T-cell (primary cell): ENCODE measurements at regions of chr1 and their contacts with region 1.

Region 1: GRCh38 chr1:114346480-114347029 is 164.4 kb downstream of the TRIM33 start:
- DNase-seq: peak; percentile 91 to 99 (median 97)
- ATAC-seq: peak; percentile 97 to 100 (median 98)
- H3K4me3 ChIP-seq: peak overlapping the region; percentile 39 to 56
- H3K4me3 Mint-ChIP-seq: peak overlapping the region; percentile 83 to 88 (median 85)
- H3K27ac ChIP-seq: peak overlapping the region; percentile 52
- H3K27ac Mint-ChIP-seq: peak overlapping the region; percentile 90 to 92
- H3K4me1 ChIP-seq: peaks cover 17 to 44% of the 10 kb centered on the region in 2 experiments
- H3K4me1 Mint-ChIP-seq: peaks cover 29 to 41% (median 36%) of the 10 kb centered on the region in 3 donors
- H3K27me3 ChIP-seq: no peaks in the 10 kb centered on the region
- H3K27me3 Mint-ChIP-seq: peaks cover 0 to 2% of the 10 kb centered on the region in 2 donors

Region 2: GRCh38 chr1:114053604-114054003 is 293.0 kb before region 1 on chr1:
- CTCF ChIA-PET with region 1: no interaction called
- POLR2A ChIA-PET with region 1: no interaction called
- DNase-seq: no peak
- ATAC-seq: no peak
- H3K4me3 ChIP-seq: no peak overlapping the region
- H3K4me3 Mint-ChIP-seq: no peak overlapping the region
- H3K27ac ChIP-seq: no peak overlapping the region
- H3K27ac Mint-ChIP-seq: no peak overlapping the region
- H3K4me1 ChIP-seq: no peaks in the 10 kb centered on the region
- H3K4me1 Mint-ChIP-seq: no peaks in the 10 kb centered on the region
- H3K27me3 ChIP-seq: peaks cover 0 to 10% of the 10 kb centered on the region in 2 experiments
- H3K27me3 Mint-ChIP-seq: peaks cover 8 to 10% of the 10 kb centered on the region in 2 donors

Region 3: GRCh38 chr1:114428083-114428749 is 81.7 kb after region 1 on chr1:
- CTCF ChIA-PET with region 1: interaction called, 7 to 18 read pairs
- POLR2A ChIA-PET with region 1: no interaction called
- DNase-seq: peak in 17 of 35 experiments; percentile 1 to 54 (median 14)
- ATAC-seq: no peak
- H3K4me3 ChIP-seq: no peak overlapping the region
- H3K4me3 Mint-ChIP-seq: no peak overlapping the region
- H3K27ac ChIP-seq: no peak overlapping the region
- H3K27ac Mint-ChIP-seq: peak overlapping the region in 1 of 2 donors; percentile 28
- H3K4me1 ChIP-seq: no peaks in the 10 kb centered on the region
- H3K4me1 Mint-ChIP-seq: no peaks in the 10 kb centered on the region
- H3K27me3 ChIP-seq: no peaks in the 10 kb centered on the region
- H3K27me3 Mint-ChIP-seq: no peaks in the 10 kb centered on the region